Posterior vena cava (tissue), 2 donors: ENCODE measurements at regions of chr11 and their contacts with region 1.

Region 1: DNA sequence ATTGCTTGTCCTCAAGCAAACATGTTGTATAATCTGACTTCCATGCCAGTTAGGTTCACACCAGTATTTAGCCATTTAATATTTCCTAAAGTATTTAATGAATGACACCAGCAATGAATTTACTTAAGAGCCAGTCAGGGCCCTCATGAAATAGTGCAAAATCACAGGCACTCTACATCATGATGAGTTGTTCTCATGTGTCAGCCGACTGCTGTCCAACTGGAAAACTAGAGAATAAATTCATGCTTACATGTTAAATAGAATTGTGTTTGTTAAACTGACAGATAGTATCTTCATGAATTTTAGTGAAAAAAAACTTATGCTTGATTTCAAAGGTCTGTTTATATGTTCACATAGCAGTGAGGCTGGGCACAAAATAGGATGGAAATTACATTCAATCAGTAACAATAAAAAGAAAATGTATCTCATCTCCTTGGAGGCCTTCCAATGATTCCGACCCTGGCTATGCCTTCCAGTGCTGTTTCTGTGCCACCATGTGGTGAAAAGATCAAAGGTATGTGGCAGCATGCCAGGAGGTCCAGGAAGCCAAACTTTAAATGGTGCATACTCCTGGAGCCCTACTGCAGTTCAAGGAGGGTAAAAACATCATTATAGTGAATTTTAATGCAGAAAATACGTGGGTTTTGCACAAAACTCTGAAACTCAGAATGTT is 45.2 kb downstream of the CTSC start:
- DNase-seq: no peak

Region 2: GRCh38 chr11:89443361-89444322 is 1151.3 kb after region 1 on chr11:
- intact Hi-C with region 1: loop called in 1 of 2 experiments (anchors 5 kb)
- DNase-seq: no peak